PC-3 (cell line): ENCODE measurements at regions of chr12 and their contacts with region 1.

Region 1: DNA sequence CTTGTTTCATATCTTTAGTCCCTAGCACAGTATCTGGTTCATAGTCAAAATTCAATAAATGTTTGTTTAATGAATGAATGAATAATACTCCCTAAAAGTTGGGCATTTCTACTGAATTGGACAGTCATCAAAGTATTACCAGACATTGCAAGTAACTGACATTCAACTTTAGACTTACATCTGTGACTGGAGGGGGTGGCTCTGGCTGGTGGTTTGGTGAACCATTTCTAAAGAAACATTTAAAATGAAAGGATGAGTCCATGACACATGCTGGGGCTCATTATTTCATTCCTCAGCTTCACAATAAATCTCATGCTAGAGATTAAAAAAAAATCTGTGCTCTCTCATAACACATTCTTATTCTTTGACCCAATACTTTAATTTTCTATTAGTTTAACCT is 20.6 kb upstream of the CSRNP2 start:
- DNase-seq: no peak
- ATAC-seq: no peak
- H3K4me3 ChIP-seq: no peak overlapping the region
- H3K27ac ChIP-seq: no peak overlapping the region
- H3K4me1 ChIP-seq: no peaks in the 10 kb centered on the region
- H3K27me3 ChIP-seq: no peaks in the 10 kb centered on the region
- CTCF ChIP-seq: no peak

Region 2: DNA sequence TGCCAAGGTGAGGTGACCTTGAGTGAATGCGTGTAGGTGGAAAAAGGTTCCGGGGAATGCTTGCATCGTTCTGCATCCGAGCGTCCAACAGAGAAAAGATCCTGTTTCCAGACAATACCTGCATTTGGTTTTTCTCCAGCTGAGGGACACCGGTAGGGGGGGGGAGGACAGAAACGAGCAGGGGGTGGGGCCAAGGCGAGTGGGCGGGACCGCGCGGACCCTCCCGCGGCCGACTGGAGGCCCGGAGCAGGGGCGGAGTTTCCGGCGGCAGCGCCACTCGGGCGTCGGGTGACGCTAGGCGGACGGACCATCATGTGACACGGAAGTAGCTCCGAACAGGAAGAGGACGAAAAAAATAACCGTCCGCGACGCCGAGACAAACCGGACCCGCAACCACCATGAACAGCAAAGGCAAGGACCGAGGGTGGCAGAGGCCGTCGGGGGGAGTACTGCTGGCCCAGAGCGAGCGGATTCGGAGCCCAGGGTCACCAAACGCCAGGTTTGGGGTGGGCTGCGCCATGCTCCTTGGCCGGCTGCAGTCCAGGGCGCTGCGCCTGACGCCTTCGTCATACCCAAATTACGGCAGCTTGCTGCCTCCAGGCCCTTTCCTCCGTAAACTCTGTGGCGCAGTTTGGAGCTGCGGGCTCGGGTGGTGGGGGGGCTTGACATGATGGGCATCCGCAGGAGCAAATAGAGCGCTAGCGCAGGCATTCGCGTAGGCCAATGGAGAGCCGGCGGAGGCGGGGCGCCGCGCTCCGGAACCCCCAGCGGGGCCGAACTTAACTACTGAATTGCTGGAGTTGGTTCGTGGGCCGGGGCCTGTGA is 134.7 kb after region 1 on chr12 and contains the start of gene DAZAP2:
- CTCF ChIA-PET with region 1: no interaction called
- POLR2A ChIA-PET with region 1: no interaction called
- intact Hi-C with region 1: no loop called
- DNase-seq: peak; percentile 76
- ATAC-seq: peak; percentile 93
- H3K4me3 ChIP-seq: peak within 1 kb of the TSS; percentile 80
- H3K27ac ChIP-seq: peak within 1 kb of the TSS; percentile 92
- H3K4me1 ChIP-seq: 0 out of 2 replicates have a peak, but pooled peaks cover 5% of the 10 kb centered on the region
- H3K27me3 ChIP-seq: no peaks in the 10 kb centered on the region
- CTCF ChIP-seq: no peak
- total RNA-seq, gene DAZAP2: 56.1 and 57.4 TPM in 2 replicates

Region 3: GRCh38 chr12:51326762-51327439 is 222.9 kb after region 1 on chr12:
- CTCF ChIA-PET with region 1: no interaction called
- POLR2A ChIA-PET with region 1: no interaction called
- intact Hi-C with region 1: loop called (anchors 5 kb)
- DNase-seq: peak; percentile 36
- ATAC-seq: peak; percentile 58; the same call in 1 of the 2 replicates
- H3K4me3 ChIP-seq: no peak overlapping the region
- H3K27ac ChIP-seq: no peak overlapping the region
- H3K4me1 ChIP-seq: peaks cover 8% of the 10 kb centered on the region; the same call in 1 of the 2 replicates
- H3K27me3 ChIP-seq: no peaks in the 10 kb centered on the region
- CTCF ChIP-seq: no peak